ENCODE measurements at regions of chr17 and their contacts with region 1.

Region 1: GRCh38 chr17:35849469-35850348 is 19.0 kb downstream of the HEATR9 start:
- ATAC-seq: peak in 6 of 8 experiments; percentile 37 to 88 (median 74)
- H3K4me3 ChIP-seq: no peak overlapping the region
- H3K27ac ChIP-seq: no peak overlapping the region
- H3K4me1 ChIP-seq: no peaks in the 10 kb centered on the region

Region 2: GRCh38 chr17:35740997-35741931 is 108.4 kb before region 1 on chr17:
- in situ Hi-C with region 1: no loop called
- ATAC-seq: peak; percentile 30 to 86 (median 53)
- H3K4me3 ChIP-seq: no peak overlapping the region
- H3K27ac ChIP-seq: no peak overlapping the region
- H3K4me1 ChIP-seq: peaks cover 0 to 6% of the 10 kb centered on the region in 2 donors

Region 3: GRCh38 chr17:35930211-35931065 is 80.7 kb after region 1 on chr17 and contains the start of gene RDM1:
- in situ Hi-C with region 1: loop called in 1 of 9 experiments (anchors 25 kb)
- ATAC-seq: peak; percentile 78 to 99 (median 87)
- H3K4me3 ChIP-seq: peak within 1 kb of the TSS; percentile 41 to 68 (median 54)
- H3K27ac ChIP-seq: no peak within 1 kb of the TSS
- H3K4me1 ChIP-seq: peaks cover 0 to 5% of the 10 kb centered on the region in 2 donors
- total RNA-seq, gene RDM1: 0.21 to 3.7 (median 0.76) TPM in 7 of 8 experiments, not detected in the other